ENCODE measurements at regions of chr17 and their contacts with region 1.

Region 1: GRCh38 chr17:27601069-27601975 is 29.7 kb upstream of the LGALS9 start:
- DNase-seq: peak; percentile 41 to 97 (median 88)

Region 2: GRCh38 chr17:27083408-27084185 is 517.7 kb before region 1 on chr17:
- intact Hi-C with region 1: no loop called
- DNase-seq: no peak

Region 3: DNA sequence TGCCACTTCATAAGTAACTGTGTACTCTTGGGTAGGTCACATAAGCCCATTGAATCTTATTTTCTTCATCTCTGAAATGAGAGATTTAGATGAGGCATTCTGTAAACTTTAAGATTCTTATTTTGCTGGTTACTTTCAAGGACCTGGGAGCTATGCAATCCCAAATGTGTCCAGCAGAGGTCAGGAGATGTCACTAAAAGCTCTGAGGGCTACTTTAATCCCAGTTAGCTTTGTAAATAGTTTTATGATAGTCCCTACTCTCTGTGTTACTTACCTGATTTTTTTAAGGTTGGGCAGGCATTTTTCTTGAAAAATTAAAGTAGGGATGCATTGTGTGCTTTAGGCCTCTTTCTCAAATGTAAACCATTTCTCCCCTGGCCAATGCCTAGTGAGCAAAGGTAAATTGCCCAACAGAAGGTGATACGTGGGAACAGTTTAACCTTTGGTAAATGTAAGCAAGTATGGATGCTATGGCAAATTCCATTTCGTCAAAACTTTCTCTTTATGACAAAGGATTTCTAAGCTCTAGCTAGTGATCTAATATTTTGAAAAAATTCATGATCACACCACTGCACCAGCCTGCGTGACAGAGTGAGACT is 364.5 kb before region 1 on chr17:
- intact Hi-C with region 1: loop called (anchors 5 kb)
- DNase-seq: peak in 41 of 42 donors; percentile 29 to 94 (median 84)

Region 4: DNA sequence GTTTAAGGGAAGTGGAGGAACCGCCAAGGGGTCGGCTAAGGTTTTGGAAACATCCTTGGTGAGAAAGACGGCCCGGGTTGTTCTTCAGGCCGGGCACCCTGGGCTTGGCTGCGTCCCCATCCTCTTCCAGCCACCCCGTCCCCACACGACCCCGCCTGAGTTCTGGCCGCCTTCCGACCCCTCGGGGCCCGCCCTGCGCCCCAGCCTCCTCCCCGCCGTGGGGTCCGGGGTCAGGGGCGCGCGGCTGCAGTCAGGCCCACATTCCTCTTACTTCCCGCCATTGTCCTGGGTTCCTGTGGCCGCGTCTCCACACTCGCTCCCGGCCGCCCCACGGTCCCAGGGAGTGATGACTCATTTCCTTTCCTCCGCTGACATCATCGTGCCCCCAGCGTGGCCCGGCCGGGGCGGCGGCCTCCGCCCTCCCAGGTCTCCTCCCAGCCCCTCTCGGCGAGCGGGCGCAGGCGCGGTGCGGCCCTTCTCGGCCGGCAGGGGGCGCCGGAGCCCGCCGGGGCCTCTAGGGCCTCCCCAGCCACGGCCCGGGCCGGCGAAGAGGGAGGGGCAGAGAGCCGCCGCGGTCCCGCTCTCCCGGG is 247.8 kb before region 1 on chr17:
- intact Hi-C with region 1: loop called (anchors 1 kb)
- DNase-seq: peak; percentile 66 to 96 (median 88)

Region 5: DNA sequence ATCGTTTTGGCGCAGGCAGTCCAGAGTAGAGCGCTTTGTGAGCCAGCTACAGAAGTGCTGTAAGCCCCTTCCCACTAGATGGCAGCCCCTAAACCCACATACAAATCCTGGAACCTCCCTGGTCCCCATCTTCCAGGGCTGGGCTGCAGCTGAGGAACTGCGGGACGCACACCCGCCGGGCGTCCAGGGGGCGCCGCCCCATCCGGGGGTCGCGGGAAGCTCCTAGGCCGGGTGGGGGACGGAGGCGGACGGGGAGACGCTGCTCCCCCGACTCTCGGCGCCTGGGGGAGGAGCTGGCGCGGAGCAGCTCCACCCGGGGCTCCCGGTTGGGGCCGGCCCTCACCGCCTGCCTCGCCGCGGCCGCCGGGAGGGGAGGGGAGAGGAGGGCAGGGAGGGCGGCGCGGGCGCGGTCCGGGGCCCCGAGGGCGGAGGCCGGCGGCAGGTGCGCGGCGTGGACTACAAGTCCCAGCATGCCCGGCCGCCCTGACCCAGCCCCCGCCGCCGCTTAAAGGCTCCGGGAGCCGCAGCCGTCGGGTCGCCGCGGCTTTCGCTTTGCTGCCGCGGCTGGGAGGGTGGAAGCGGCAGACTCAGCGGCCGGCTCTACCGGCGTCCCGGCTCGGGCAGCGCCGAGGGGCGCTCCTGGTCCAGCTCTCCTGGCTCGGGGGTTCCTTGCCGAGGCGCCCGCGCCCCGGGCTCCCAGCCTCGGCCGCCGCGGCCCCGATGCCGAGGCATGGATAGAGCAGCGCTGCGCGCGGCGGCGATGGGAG is 145.2 kb before region 1 on chr17 and contains the start of gene KSR1:
- intact Hi-C with region 1: loop called (anchors 2 kb)
- DNase-seq: peak; percentile 71 to 91 (median 82)

Region 6: DNA sequence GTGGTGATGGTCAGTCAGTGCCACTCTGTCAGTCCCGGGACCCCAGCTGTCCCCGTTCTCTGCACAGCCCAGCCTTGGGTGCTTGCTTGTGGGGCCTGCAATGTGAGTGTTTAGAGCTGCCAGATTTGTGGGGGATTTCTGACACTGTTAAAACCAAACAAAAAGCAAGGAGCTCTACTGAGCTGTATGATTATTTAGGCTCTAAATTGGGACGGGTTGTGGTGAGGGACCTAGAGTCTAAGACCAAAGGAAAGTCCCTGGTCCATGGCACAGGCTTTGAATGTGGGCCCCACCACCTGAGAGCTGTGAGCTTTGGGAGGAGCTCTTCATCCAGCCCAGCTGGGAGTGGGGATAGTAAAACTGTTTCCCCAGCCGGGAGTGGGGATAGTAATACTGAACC is 81.8 kb before region 1 on chr17:
- intact Hi-C with region 1: loop called (anchors 10 kb)
- DNase-seq: no peak

Region 7: GRCh38 chr17:27649929-27650328 is 48.6 kb after region 1 on chr17:
- intact Hi-C with region 1: loop called (anchors 1 kb)
- DNase-seq: peak; percentile 31 to 88 (median 68)

Region 8: GRCh38 chr17:27701963-27702362 is 100.6 kb after region 1 on chr17:
- intact Hi-C with region 1: no loop called
- DNase-seq: no peak

Region 9: DNA sequence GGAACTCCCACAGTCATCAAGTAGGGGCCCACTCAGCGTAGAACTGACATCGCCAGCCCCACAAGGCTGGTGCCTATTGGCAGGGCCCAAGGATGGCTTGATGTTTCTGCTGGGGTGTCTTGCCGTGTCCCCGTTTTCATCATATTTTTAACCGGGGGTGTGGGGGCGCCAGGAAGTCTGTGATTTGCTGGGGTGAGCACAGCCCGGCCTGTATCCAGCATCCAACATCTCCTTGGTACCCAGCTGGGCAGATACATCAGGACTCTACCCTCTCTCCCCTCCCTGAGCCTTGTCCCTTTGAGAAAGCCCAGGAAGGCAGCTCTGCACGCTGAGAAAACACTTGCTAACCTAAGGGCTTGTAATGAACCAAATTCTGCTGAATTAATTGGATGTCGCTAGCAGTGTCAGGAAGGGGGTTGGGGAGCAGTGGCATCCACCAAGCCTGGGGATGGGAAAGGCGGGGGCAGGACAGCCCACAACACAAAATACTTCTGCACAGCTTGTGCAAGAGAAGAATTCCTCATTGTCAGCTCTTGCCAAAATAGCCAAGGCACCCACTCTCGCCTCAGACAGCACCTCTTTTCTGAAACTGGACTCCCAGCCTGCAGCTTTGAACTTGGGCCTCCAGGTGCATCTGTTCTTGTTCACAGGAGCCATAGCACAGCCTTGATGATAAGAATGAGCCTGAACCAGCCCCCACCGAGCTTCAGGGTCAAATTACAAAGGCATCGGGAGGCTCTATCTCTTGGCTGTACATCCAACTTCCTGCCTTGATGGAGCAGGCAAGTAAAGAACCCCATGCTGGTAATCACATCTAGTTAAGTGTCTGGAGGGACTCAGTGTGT is 355.5 kb after region 1 on chr17:
- intact Hi-C with region 1: no loop called
- DNase-seq: no peak

Measured in head of caudate nucleus (tissue), 42 donors.